CD8-positive, alpha-beta memory T cell (primary cell): ENCODE measurements at regions of chr10 and their contacts with region 1.

Region 1: GRCh38 chr10:71708301-71708703 is 11.3 kb downstream of the C10orf105 start:
- DNase-seq: peak; percentile 42 to 76 (median 49)
- H3K4me3 ChIP-seq: peak overlapping the region; percentile 26
- H3K4me3 Mint-ChIP-seq: peak overlapping the region in 3 of 7 donors; percentile 20 to 78 (median 32)
- H3K27ac ChIP-seq: no peak overlapping the region
- H3K27ac Mint-ChIP-seq: peak overlapping the region in 4 of 8 donors; percentile 17 to 72 (median 56)
- H3K4me1 ChIP-seq: peaks cover 30% of the 10 kb centered on the region
- H3K4me1 Mint-ChIP-seq: peaks cover 39 to 54% (median 39%) of the 10 kb centered on the region in 3 donors
- H3K27me3 ChIP-seq: no peaks in the 10 kb centered on the region
- H3K27me3 Mint-ChIP-seq: no peaks in the 10 kb centered on the region

Region 2: DNA sequence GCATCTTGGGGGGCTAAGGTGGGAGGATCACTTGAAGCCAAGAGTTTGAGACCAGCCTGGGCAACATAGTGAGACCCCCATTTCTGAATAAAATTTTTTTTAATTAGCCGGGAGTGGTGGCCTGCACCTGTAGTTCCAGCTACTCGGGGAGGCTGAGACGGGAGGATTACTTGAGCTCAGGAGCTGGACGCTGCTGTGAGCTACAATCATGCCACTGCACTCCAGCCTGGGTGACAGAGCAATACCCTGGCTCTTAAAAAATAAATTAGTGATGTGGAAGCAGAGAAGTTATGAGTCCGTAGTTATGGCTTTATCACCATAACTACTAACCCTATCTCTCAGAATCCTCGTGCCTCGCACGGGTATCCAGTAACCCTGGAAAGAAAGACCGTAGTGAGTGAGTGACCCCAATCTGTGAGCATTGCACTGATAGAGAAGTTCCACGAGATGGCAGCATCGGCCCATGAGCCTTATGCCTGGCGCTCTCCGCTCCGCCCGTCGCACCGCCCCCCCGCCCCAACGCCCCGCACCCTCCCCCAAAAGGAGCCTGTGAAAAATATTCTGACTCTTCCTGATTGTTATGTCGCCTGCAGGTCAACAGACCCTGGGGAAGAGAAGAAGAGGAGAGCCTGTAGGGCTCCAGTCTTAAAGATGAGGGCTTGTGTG is 394.1 kb before region 1 on chr10:
- CTCF ChIA-PET with region 1: interaction called, 19 read pairs
- POLR2A ChIA-PET with region 1: no interaction called
- DNase-seq: peak; percentile 39 to 69 (median 44)
- H3K4me3 ChIP-seq: no peak overlapping the region
- H3K4me3 Mint-ChIP-seq: peak overlapping the region in 3 of 7 donors; percentile 36 to 69 (median 40)
- H3K27ac ChIP-seq: no peak overlapping the region
- H3K27ac Mint-ChIP-seq: no peak overlapping the region
- H3K4me1 ChIP-seq: peaks cover 8% of the 10 kb centered on the region
- H3K4me1 Mint-ChIP-seq: peaks cover 10 to 16% (median 11%) of the 10 kb centered on the region in 3 donors
- H3K27me3 ChIP-seq: no peaks in the 10 kb centered on the region
- H3K27me3 Mint-ChIP-seq: peaks cover 5 to 21% of the 10 kb centered on the region in 2 donors

Region 3: GRCh38 chr10:71696628-71697326 is 11.5 kb before region 1 on chr10:
- CTCF ChIA-PET with region 1: interaction called, 160 read pairs
- POLR2A ChIA-PET with region 1: interaction called, 5 read pairs
- DNase-seq: peak; percentile 35 to 75 (median 55)
- H3K4me3 ChIP-seq: no peak overlapping the region
- H3K4me3 Mint-ChIP-seq: peak overlapping the region in 5 of 7 donors; percentile 11 to 68 (median 28)
- H3K27ac ChIP-seq: no peak overlapping the region
- H3K27ac Mint-ChIP-seq: peak overlapping the region in 5 of 8 donors; percentile 51 to 88 (median 68)
- H3K4me1 ChIP-seq: peaks cover 54% of the 10 kb centered on the region
- H3K4me1 Mint-ChIP-seq: peaks cover 44 to 62% (median 52%) of the 10 kb centered on the region in 3 donors
- H3K27me3 ChIP-seq: no peaks in the 10 kb centered on the region
- H3K27me3 Mint-ChIP-seq: no peaks in the 10 kb centered on the region

Region 4: DNA sequence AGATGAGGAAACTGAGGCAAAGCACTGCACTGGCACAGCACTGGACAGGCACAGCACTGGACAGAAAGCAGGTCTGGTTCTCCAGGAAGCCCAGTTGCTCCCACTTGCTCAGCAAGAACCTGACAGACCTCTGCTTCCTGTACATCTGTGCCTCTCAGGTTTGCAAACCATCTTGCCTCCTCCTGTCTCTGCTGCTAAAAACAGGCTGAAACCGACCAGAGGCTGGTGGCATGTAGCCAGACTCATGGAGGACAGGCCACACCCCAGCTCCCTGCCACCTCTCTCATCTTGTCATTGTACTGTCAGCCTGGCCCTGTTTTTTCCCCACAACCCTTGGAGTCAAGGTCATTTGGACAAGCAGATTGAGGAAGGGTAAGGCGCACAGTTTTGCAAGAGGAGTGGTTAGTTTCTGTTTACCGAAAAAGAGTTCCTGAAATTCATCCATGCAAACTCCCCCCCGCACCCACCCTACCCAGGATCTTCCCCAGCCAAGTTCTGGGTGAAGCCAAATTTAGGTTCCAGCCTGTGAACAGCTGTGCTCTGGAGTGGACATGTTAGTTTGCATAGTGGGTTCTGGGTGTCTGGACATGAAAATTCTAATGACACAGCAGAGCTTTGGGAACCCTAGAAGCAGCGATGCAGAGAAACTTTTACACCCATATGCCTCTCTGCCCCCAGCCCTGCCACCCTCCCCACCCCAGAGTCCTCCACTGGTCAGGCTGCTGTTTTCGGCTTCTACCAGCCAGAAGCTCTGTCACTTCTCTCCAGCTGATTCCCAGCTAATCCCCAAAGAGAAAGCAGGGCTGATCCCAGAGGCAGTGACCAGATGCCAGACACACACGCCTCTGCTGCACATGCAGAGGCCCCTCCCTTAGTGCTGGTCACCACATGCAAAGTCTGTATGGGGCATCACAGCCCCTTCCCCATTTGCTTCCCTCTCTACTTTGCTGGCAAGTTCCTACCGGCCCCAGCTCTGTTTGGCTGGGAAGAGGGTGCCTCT is 19.7 kb after region 1 on chr10:
- CTCF ChIA-PET with region 1: interaction called, 70 read pairs
- POLR2A ChIA-PET with region 1: interaction called, 10 read pairs
- DNase-seq: peak; percentile 65 to 90 (median 85)
- H3K4me3 ChIP-seq: peak overlapping the region; percentile 24
- H3K4me3 Mint-ChIP-seq: peak overlapping the region; percentile 64 to 88 (median 79)
- H3K27ac ChIP-seq: peak overlapping the region; percentile 77
- H3K27ac Mint-ChIP-seq: peak overlapping the region; percentile 97 to 99 (median 98)
- H3K4me1 ChIP-seq: peaks cover 96% of the 10 kb centered on the region
- H3K4me1 Mint-ChIP-seq: peaks cover 73 to 96% (median 81%) of the 10 kb centered on the region in 3 donors
- H3K27me3 ChIP-seq: no peaks in the 10 kb centered on the region
- H3K27me3 Mint-ChIP-seq: peaks cover 0 to 2% of the 10 kb centered on the region in 2 donors

Region 5: DNA sequence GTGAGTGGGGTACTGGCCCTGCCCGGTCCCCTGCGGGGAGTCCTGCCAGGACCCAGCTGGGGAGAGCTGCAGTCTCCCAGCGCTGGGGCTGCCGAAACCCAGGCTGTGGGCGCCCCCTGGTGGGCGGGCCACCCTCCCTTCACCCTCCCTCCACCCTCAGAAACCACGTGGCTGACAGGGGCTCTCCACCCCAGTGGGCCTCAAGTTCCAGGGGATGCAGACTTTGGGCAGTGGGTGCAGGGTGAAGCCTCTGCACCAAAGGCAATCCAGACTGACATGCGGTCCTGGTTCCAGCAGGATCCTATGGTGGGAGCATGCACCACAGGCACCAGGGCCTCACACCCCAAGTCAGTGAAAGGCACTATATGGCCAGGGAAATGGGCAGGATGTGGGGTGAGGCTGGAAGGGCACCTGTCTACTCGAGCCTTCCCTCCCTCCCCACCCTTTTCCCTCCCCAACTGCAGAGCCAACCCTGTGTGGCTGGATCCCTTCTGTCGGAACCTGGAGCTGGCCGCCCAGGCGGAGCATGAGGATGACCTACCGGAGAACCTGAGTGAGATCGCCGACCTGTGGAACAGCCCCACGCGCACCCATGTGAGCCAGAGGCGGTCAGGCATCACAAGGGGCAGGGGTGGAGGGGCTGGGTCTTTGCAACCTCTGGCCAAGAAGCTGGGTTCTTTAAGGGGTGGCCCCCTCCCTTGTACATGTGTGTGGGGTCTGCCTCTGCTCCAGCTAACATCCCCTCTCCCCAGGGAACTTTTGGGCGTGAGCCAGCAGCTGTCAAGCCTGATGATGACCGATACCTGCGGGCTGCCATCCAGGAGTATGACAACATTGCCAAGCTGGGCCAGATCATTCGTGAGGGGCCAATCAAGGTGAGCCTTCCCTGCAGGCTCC is 104.0 kb after region 1 on chr10:
- CTCF ChIA-PET with region 1: interaction called, 14 read pairs
- POLR2A ChIA-PET with region 1: no interaction called
- DNase-seq: peak; percentile 61 to 80 (median 74)
- H3K4me3 ChIP-seq: no peak overlapping the region
- H3K4me3 Mint-ChIP-seq: no peak overlapping the region
- H3K27ac ChIP-seq: no peak overlapping the region
- H3K27ac Mint-ChIP-seq: peak overlapping the region in 1 of 8 donors; percentile 19
- H3K4me1 ChIP-seq: peaks cover 5% of the 10 kb centered on the region
- H3K4me1 Mint-ChIP-seq: no peaks in the 10 kb centered on the region
- H3K27me3 ChIP-seq: no peaks in the 10 kb centered on the region
- H3K27me3 Mint-ChIP-seq: no peaks in the 10 kb centered on the region